Activated CD4-positive, alpha-beta memory T cell treated with anti-CD3 and anti-CD28 coated beads for 36 hours (primary cell): ENCODE measurements at regions of chrX and their contacts with region 1.

Region 1: GRCh38 chrX:38327007-38327774 is at the start of gene RPGR:
- DNase-seq: peak; percentile 94
- H3K4me3 Mint-ChIP-seq: peak within 1 kb of the TSS; percentile 87
- H3K27ac Mint-ChIP-seq: peak within 1 kb of the TSS; percentile 85
- H3K4me1 Mint-ChIP-seq: peaks cover 13% of the 10 kb centered on the region
- H3K27me3 Mint-ChIP-seq: no peaks in the 10 kb centered on the region
- total RNA-seq, gene RPGR: 5.7 to 8.3 TPM

Region 2: DNA sequence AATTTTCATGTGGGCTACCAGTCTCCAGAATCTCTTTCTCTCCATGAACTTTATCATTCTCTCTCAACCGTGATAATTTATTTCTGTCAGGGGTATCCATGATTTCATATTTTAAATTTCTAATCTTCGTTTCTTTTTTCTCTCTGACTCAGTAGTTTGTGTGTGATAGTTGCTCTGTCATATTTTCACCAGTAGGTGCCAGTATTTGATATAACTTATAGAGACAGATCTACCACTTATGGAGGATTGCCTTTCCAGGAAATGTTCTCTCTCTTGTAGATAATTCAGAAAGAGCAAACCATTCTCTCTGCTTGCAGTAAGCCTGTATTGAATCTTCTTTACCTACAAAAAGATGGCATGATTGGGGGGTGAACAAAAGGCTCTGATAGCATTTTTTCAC is 400.5 kb before region 1 on chrX:
- CTCF ChIA-PET with region 1: interaction called, 5 read pairs
- POLR2A ChIA-PET with region 1: no interaction called
- intact Hi-C with region 1: loop called (anchors 1 kb)
- DNase-seq: no peak
- H3K4me3 Mint-ChIP-seq: no peak overlapping the region
- H3K27ac Mint-ChIP-seq: no peak overlapping the region
- H3K4me1 Mint-ChIP-seq: no peaks in the 10 kb centered on the region
- H3K27me3 Mint-ChIP-seq: no peaks in the 10 kb centered on the region

Region 3: GRCh38 chrX:38192007-38192810 is 135.0 kb before region 1 on chrX:
- CTCF ChIA-PET with region 1: no interaction called
- POLR2A ChIA-PET with region 1: no interaction called
- intact Hi-C with region 1: loop called (anchors 10 kb)
- DNase-seq: peak; percentile 7
- H3K4me3 Mint-ChIP-seq: no peak overlapping the region
- H3K27ac Mint-ChIP-seq: no peak overlapping the region
- H3K4me1 Mint-ChIP-seq: no peaks in the 10 kb centered on the region
- H3K27me3 Mint-ChIP-seq: no peaks in the 10 kb centered on the region